Stomach (tissue), 19 donors: ENCODE measurements at regions of chr5 and their contacts with region 1.

Region 1: DNA sequence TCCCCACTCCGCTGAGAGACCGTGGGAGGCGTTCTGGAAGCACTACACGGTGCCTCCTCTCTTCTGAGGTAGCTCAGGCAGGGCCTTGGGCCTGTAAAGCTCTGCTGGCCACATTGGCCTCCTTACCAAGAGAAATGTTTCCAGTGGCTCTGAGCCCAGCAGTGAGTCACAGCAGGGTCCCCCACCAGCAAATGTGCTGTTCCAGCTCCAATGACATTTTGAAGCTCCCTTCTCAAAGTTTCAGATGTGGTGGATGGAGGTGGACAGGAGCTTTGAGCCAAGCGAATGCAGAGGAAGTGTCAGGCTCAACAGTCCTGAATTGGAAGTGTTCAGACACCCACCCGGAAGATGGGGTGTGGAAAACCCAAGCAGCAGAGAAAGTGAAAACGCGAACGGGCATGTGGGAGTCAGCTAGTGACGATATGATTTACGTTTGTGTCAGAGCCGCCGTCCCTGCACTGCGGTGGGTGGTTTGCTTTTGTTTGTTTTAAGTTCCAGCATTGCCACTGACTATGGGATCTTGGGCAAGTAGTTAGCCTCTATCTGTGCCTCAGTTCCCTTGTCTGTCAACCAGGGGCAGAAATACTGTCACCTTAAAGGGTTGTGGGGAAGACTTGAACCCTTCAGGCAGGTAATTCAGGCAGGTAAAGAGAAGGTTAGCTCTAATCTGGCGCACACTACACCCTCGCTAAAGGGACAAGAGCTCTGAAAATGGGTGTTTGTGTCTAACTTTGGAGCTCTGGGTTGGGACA is 38.2 kb downstream of the C5orf15 start:
- DNase-seq: no peak
- H3K4me3 ChIP-seq: no peak overlapping the region
- H3K27ac ChIP-seq: no peak overlapping the region
- H3K4me1 ChIP-seq: peaks cover 9 to 40% (median 22%) of the 10 kb centered on the region in 4 donors
- H3K27me3 ChIP-seq: no peaks in the 10 kb centered on the region
- CTCF ChIP-seq: no peak
- EP300 ChIP-seq: no peak
- POLR2A ChIP-seq: no peak

Region 2: GRCh38 chr5:133423618-133424282 is 506.5 kb before region 1 on chr5:
- intact Hi-C with region 1: loop called (anchors 10 kb)
- DNase-seq: peak; percentile 72 to 81
- H3K4me3 ChIP-seq: no peak overlapping the region
- H3K27ac ChIP-seq: no peak overlapping the region
- H3K4me1 ChIP-seq: peaks cover 0 to 7% (median 4%) of the 10 kb centered on the region in 4 donors
- H3K27me3 ChIP-seq: peaks cover 0 to 19% (median 0%) of the 10 kb centered on the region in 3 donors
- CTCF ChIP-seq: peak in 5 of 7 experiments; percentile 76 to 91 (median 83)
- EP300 ChIP-seq: no peak
- POLR2A ChIP-seq: no peak